Head of caudate nucleus (tissue), 42 donors: ENCODE measurements at regions of chr7 and their contacts with region 1.

Region 1: DNA sequence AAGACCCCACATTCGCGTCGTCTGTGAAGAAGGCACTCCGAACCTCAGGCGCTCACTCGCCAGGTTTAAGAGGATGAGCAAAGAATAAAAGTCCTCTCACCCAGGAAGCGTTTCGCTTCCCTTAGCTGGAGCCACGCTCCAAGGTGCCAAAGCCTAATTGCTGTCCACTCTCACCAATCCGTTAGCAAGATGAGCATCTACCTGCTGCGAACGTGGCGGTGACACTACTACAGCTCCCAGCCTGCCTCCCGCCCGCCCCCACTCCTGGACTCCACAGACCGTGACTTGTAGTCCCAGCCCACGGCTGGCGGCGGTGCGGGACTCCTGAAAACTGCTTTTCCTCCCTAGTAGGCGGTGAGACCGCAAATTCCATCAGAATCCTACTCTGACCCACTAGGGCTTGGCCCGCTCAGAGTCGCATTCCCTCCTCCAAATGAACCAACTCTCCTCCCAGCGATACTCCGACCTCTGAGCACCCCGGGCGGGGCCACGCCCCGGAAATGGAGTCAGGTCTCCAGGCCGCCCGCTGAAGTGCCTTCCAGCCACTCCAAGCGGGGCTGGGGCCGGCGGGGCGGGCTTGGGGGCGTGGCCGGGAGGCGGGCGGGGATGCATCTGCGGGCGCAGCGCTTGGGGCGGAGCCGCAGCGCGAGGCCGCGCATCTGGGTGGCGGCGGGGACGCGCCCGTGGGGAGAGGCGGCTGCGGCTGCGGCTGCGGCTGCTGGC is 521 bp upstream of the PTPN12 start:
- DNase-seq: peak; percentile 95 to 100 (median 99)

Region 2: GRCh38 chr7:77442636-77443035 is 93.9 kb before region 1 on chr7:
- intact Hi-C with region 1: loop called (anchors 5 kb)
- DNase-seq: no peak

Region 3: GRCh38 chr7:77455324-77455723 is 81.2 kb before region 1 on chr7:
- intact Hi-C with region 1: loop called (anchors 5 kb)
- DNase-seq: peak; percentile 33 to 93 (median 75)

Region 4: DNA sequence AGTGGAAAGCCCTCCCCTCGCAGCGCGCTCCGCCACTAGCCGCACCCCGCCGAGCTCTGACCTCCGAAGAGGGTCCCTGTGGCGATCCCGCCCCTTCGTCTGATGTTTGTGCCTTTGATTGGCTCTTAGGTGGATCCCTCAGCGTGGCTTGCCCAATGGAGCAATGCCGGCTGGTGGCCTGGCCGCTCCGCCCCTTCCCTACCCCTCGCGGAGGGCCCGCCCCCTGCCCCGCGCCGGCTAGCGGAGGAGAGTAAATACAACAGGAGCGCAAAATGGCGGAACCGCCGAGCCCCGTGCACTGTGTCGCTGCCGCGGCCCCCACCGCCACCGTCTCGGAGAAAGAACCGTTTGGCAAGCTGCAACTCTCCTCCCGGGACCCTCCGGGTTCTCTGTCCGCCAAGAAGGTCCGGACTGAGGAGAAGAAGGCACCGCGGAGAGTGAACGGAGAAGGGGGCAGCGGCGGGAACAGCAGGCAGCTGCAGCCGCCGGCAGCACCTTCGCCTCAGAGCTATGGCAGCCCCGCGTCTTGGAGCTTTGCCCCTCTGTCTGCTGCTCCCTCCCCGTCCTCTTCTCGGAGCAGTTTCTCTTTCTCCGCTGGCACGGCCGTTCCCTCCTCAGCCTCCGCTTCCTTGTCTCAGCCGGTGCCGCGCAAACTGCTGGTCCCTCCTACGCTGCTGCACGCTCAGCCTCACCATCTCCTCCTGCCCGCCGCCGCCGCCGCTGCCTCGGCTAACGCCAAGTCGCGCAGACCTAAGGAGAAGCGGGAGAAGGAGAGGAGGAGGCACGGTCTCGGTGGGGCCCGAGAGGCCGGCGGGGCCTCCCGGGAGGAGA is 159.8 kb after region 1 on chr7 and contains the start of gene RSBN1L:
- intact Hi-C with region 1: loop called (anchors 5 kb)
- DNase-seq: peak; percentile 97 to 100 (median 99)

Region 5: GRCh38 chr7:77989981-77990566 is 453.5 kb after region 1 on chr7:
- intact Hi-C with region 1: no loop called
- DNase-seq: peak in 2 of 42 donors; percentile 12 to 19